ENCODE measurements at regions of chr21 and their contacts with region 1.

Region 1: GRCh38 chr21:32403201-32403777 is 9.2 kb upstream of the EVA1C start:
- DNase-seq: peak; percentile 57 to 81 (median 69)
- H3K4me3 ChIP-seq: no peak overlapping the region
- H3K27ac ChIP-seq: no peak overlapping the region
- H3K4me1 ChIP-seq: peaks cover 0 to 3% of the 10 kb centered on the region in 2 donors
- H3K27me3 ChIP-seq: no peaks in the 10 kb centered on the region
- CTCF ChIP-seq: peak; percentile 54 to 74 (median 68)
- POLR2A ChIP-seq: no peak

Region 2: GRCh38 chr21:32162727-32163320 is 240.5 kb before region 1 on chr21:
- intact Hi-C with region 1: no loop called
- DNase-seq: no peak
- H3K4me3 ChIP-seq: no peak overlapping the region
- H3K27ac ChIP-seq: no peak overlapping the region
- H3K4me1 ChIP-seq: no peaks in the 10 kb centered on the region
- H3K27me3 ChIP-seq: no peaks in the 10 kb centered on the region
- CTCF ChIP-seq: no peak
- POLR2A ChIP-seq: no peak

Region 3: DNA sequence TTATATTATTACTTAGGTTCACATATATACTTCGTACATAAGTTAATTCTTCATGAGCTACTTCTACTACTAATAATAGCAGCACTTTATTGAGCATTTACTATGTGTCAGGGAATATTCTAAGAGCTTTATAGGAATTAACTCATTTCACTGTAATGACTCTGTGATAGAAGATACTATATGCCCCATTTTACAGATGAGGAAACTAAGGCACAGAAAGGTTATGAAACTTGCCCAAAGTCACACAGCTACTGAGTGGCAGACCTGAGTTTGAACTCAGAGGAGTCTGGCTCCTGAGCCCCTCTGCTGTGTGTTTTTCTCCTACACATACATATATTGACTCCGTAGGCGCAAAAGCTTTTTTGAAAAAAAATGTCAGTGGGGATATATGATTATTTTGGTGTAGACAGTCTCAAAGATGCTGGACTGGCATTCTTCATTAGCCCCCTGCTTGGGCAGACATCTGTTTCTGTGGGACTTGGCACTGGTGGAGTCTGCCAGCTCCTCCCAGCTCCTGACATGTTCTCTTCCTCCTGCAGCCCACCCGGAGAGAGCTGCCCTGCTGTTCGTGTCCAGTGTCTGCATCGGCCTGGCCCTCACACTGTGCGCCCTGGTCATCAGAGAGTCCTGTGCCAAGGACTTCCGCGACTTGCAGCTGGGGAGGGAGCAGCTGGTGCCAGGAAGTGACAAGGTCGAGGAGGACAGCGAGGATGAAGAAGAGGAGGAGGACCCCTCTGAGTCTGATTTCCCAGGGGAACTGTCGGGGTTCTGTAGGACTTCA is 111.2 kb after region 1 on chr21:
- intact Hi-C with region 1: no loop called
- DNase-seq: no peak
- H3K4me3 ChIP-seq: no peak overlapping the region
- H3K27ac ChIP-seq: no peak overlapping the region
- H3K4me1 ChIP-seq: peaks cover 0 to 6% of the 10 kb centered on the region in 2 donors
- H3K27me3 ChIP-seq: no peaks in the 10 kb centered on the region
- CTCF ChIP-seq: no peak
- POLR2A ChIP-seq: no peak

Region 4: GRCh38 chr21:32565856-32566465 is 162.7 kb after region 1 on chr21:
- intact Hi-C with region 1: loop called in 1 of 2 experiments (anchors 2 kb)
- DNase-seq: no peak
- H3K4me3 ChIP-seq: no peak overlapping the region
- H3K27ac ChIP-seq: no peak overlapping the region
- H3K4me1 ChIP-seq: peaks cover 0 to 5% of the 10 kb centered on the region in 2 donors
- H3K27me3 ChIP-seq: no peaks in the 10 kb centered on the region
- CTCF ChIP-seq: no peak
- POLR2A ChIP-seq: no peak

Region 5: DNA sequence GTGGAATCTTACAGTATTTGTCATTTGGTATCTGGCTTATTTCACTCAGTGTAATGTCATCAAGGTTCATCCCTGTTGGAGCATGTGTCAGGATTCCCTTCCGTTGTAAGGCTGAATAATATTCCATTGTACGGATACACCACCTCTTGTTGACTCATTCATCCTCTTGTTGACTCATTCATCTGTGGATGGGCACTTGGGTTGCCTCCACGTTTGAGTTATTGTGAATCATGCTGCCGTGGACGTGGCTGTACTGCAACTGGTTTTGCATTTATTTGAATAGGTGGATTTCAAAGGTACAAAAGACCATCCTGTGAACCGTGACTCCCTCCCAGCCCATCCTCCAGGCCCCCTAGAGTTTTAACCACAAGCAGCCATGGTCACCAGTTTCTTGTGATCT is 193.9 kb after region 1 on chr21:
- intact Hi-C with region 1: loop called (anchors 5 to 10 kb)
- DNase-seq: peak in 2 of 7 donors; percentile 6 to 18
- H3K4me3 ChIP-seq: no peak overlapping the region
- H3K27ac ChIP-seq: no peak overlapping the region
- H3K4me1 ChIP-seq: no peaks in the 10 kb centered on the region
- H3K27me3 ChIP-seq: no peaks in the 10 kb centered on the region
- CTCF ChIP-seq: no peak
- POLR2A ChIP-seq: no peak

Region 6: DNA sequence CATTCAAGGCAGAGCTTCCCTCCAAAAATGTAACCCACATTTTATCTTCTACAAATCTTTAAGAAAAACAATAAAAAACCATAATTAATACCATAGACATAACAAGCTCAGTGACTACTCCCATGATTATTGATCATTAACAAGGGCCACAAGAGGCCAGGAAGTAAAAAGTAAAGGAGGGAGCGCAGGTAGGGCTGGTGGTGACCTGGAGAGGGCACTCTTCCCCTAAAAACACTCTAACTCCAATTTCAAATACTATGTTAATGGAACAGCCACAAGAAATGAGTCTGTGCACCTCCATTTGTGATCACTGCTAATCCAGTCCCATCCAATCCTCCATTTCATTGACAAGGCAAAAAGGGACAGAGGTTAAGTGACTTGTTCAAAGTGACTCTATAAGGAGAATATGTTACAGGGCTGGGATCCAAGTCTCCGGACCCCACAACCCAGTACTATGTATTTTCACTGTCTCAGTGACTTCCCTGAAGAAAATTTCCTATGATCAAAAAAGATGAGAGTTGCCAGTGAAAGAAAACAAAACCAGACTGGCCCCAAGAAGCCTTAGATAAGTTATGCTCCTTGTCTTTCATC is 250.1 kb after region 1 on chr21:
- intact Hi-C with region 1: no loop called
- DNase-seq: peak in 1 of 7 donors; percentile 7
- H3K4me3 ChIP-seq: no peak overlapping the region
- H3K27ac ChIP-seq: no peak overlapping the region
- H3K4me1 ChIP-seq: no peaks in the 10 kb centered on the region
- H3K27me3 ChIP-seq: no peaks in the 10 kb centered on the region
- CTCF ChIP-seq: peak; percentile 23 to 55 (median 48)
- POLR2A ChIP-seq: no peak

Measured in adrenal gland (tissue), 19 donors.